ENCODE measurements at regions of chr9 and their contacts with region 1.

Region 1: DNA sequence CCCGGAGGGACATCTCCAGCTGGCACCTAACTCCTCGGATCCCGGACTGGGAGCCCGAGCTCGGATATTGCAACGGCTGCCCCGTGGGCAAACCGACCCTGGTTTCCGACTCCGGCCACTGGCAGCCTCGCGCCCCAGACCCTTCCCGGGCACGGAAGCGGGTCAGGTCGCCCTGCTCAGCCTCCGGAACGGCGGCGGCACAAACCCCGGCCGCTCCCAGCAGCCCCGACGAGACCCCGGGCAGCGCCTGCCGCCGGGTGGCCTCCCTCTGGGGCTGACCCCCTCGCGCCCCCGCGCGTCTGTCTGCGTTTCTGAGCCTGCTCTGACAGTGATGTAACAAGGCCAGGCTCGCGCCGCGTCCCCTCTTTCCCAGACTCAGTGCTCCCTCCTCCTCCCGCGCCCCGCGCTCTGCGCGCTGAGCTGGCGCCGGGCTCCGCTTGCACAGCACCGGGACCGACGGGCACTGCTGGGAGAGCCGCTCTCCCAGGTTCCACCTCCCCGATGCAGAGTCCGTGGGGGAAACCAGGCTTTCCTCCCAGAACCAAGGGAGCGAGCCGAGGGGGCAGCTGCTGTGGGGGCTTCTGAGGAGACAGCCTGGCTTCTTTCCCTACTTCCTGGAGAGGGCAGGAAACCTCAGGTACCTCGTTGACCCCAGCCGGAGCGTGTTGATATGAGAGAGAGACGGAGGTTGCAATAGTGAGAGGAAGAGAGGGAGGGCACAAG is at the start of gene TMEM215:
- DNase-seq: no peak
- ATAC-seq: no peak
- H3K4me3 ChIP-seq: no peak within 1 kb of the TSS
- H3K27ac ChIP-seq: no peak within 1 kb of the TSS
- H3K4me1 ChIP-seq: no peaks in the 10 kb centered on the region
- H3K27me3 ChIP-seq: peaks cover 31% of the 10 kb centered on the region
- CTCF ChIP-seq: no peak
- POLR2A ChIP-seq: no peak
- RAD21 ChIP-seq: no peak
- total RNA-seq, gene TMEM215: not detected in 2 replicates

Region 2: DNA sequence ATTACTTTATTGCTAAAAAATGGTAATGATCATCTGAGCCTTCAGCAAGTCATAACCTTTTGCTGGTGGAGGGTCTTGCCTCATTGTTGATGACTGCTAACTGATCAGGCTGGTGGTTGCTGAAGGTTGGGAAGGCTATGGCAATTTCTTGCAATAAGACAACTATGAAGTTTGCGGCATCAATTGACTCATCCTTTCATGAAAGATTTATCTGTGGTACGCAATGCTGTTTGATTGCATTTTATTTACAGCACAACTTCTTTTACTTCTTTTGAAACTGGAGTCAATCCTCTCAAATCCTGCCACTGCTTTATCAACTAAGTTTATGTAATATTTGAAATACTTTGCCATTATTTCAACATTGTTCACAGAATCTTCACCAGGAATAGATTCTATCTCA is 457.2 kb before region 1 on chr9:
- CTCF ChIA-PET with region 1: no interaction called
- POLR2A ChIA-PET with region 1: no interaction called
- dilution Hi-C with region 1: no loop called
- in situ Hi-C with region 1: no loop called
- intact Hi-C with region 1: no loop called
- DNase-seq: no peak
- ATAC-seq: no peak
- H3K4me3 ChIP-seq: no peak overlapping the region
- H3K27ac ChIP-seq: no peak overlapping the region
- H3K4me1 ChIP-seq: no peaks in the 10 kb centered on the region
- H3K27me3 ChIP-seq: no peaks in the 10 kb centered on the region
- CTCF ChIP-seq: no peak
- POLR2A ChIP-seq: no peak
- RAD21 ChIP-seq: no peak

Region 3: GRCh38 chr9:32665101-32665500 is 118.2 kb before region 1 on chr9:
- CTCF ChIA-PET with region 1: no interaction called
- POLR2A ChIA-PET with region 1: no interaction called
- dilution Hi-C with region 1: no loop called
- in situ Hi-C with region 1: no loop called
- intact Hi-C with region 1: loop called (anchors 10 kb)
- DNase-seq: peak; percentile 42
- ATAC-seq: peak; percentile 53; the same call in 1 of the 2 replicates
- H3K4me3 ChIP-seq: no peak overlapping the region
- H3K27ac ChIP-seq: no peak overlapping the region
- H3K4me1 ChIP-seq: no peaks in the 10 kb centered on the region
- H3K27me3 ChIP-seq: no peaks in the 10 kb centered on the region
- CTCF ChIP-seq: no peak
- POLR2A ChIP-seq: no peak
- RAD21 ChIP-seq: no peak

Measured in IMR-90 (cell line).